ENCODE measurements at regions of chr13 and their contacts with region 1.

Region 1: DNA sequence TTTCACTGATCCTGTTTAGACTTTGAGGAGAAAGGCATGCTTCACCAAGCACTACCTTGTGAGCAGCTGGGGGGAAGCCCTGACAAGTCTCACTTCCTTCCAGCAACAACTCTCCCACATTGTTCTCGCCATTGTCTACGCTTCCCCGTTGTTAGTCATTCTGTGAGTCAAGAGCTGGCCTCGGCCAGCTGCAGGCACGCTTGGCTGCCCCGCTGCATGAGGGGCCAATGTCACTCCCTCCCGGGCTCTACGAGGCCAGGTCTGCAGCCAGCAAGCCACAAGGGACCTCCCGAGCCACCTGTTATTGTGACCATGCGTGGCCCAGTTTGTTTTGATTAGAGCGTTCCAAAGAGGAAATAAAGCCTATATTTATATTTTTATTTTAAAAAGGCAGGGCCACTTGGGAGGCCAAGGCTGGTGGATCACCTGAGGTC is 220.9 kb downstream of the FOXO1 start:
- DNase-seq: peak; percentile 100
- H3K4me3 ChIP-seq: no peak overlapping the region
- H3K27ac ChIP-seq: peak overlapping the region; percentile 92
- H3K4me1 ChIP-seq: peaks cover 80% of the 10 kb centered on the region
- CTCF ChIP-seq: no peak

Region 2: DNA sequence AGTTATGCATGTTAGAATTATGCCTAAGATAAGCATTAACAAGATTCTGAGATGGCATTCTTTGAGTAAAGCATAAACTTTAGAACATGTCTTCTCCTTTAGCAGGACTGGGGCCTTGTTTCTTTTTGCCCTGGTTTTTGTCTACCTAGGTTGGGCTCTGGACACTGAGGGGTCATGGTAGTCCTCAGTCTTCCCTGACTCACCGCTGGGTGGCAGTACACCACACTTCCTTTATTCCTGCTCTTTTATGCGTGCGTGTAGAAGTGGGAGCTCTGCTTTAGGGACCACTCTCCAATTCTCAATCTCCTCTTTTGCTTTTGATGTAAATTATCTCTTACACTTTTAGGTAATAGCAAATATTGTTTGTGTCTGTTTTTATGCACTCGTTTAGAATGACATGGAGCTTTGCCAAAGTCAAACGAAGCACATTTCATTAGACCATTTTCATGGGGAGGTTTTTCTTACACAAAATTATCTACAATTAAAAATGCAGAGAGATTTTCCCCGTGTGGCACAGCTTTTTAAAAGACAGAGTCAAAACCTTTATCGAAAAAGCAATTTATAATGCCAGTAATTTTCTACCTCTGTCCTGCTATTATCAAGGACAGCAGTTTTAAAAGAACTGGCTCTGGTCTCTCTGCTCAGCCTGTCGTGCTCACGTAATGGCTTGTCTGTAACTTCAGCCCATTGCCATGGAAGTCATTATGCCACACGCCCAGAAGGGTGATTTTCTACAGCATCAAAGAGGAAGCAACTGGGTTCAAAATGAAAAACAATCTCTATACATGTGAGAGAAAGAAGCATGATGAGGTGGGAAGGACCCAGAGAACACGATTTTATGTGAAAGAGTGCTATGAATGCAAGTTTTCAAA is 376.2 kb before region 1 on chr13:
- CTCF ChIA-PET with region 1: no interaction called
- POLR2A ChIA-PET with region 1: no interaction called
- intact Hi-C with region 1: loop called (anchors 2 kb)
- DNase-seq: peak; percentile 81
- H3K4me3 ChIP-seq: no peak overlapping the region
- H3K27ac ChIP-seq: no peak overlapping the region
- H3K4me1 ChIP-seq: peaks cover 24% of the 10 kb centered on the region
- CTCF ChIP-seq: peak; percentile 98

Region 3: DNA sequence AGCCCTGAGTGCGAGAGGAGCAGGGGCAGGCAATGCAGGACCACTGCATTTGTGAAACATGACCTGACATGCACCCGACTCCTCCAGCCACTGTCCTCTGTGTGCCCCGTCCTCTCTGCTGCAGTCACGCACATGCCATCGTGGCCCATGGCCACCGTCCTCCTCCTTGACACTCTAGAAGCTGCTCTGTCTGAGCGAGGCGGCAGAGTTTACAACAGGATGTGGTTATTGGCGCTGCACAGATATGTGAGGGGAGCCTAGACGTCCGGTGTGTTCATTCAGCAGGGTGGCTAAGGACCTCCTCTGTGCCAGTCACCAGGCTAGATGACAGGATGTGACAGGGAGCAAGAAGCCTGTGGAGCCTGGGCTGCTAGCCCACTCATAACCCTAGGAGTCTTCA is 57.0 kb before region 1 on chr13:
- CTCF ChIA-PET with region 1: no interaction called
- POLR2A ChIA-PET with region 1: no interaction called
- intact Hi-C with region 1: loop called (anchors 1 kb)
- DNase-seq: peak; percentile 96
- H3K4me3 ChIP-seq: peak overlapping the region; percentile 66
- H3K27ac ChIP-seq: peak overlapping the region; percentile 67
- H3K4me1 ChIP-seq: peaks cover 44% of the 10 kb centered on the region
- CTCF ChIP-seq: no peak

Region 4: DNA sequence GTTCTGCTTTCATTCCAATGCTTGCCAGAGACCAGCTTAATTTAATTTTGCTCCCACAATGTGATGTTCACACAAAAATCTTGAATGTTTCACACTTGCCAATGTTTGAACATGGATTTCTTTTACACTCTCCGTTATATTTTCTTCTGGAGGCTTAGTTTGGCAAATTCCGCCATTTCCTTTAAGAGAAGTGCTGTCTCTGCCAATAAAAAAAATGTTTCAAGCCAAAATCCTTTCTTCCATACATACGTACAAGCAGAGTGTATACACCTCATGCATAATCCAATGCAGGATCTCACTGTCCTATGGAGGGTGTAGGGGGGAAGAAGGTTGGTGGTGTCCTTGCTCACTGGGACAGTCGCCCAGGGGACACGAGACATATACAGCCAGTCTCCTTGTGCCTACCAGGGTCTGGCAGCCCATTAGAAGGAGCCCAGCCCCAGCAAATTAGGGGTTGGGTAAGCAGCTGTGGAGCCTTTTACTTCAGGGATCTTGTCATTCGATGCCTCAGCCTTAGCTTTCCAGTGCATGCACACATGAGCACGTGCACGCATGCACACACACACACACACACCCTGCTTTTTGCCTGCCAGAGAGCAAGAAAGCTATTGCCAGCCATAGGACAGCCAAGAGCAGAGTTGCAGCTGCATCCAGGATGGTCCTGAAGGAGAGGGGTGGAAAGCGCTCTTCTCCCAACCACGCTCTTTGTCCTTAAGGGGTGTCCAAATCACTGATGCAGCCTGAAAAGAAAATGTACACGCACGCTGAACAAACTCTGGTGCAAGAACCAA is 12.6 kb after region 1 on chr13:
- CTCF ChIA-PET with region 1: no interaction called
- POLR2A ChIA-PET with region 1: interaction called, 14 read pairs
- intact Hi-C with region 1: no loop called
- DNase-seq: no peak
- H3K4me3 ChIP-seq: no peak overlapping the region
- H3K27ac ChIP-seq: no peak overlapping the region
- H3K4me1 ChIP-seq: peaks cover 33% of the 10 kb centered on the region
- CTCF ChIP-seq: no peak

Region 5: GRCh38 chr13:40580566-40581276 is 135.1 kb after region 1 on chr13:
- CTCF ChIA-PET with region 1: no interaction called
- POLR2A ChIA-PET with region 1: interaction called, 6 read pairs
- intact Hi-C with region 1: loop called (anchors 1 kb)
- DNase-seq: peak; percentile 80
- H3K4me3 ChIP-seq: peak overlapping the region; percentile 55
- H3K27ac ChIP-seq: peak overlapping the region; percentile 99
- H3K4me1 ChIP-seq: peaks cover 99% of the 10 kb centered on the region
- CTCF ChIP-seq: no peak

Region 6: GRCh38 chr13:40653527-40654318 is 208.1 kb after region 1 on chr13:
- CTCF ChIA-PET with region 1: no interaction called
- POLR2A ChIA-PET with region 1: interaction called, 7 read pairs
- intact Hi-C with region 1: loop called (anchors 1 kb)
- DNase-seq: peak; percentile 58
- H3K4me3 ChIP-seq: peak overlapping the region; percentile 64
- H3K27ac ChIP-seq: peak overlapping the region; percentile 96
- H3K4me1 ChIP-seq: peaks cover 95% of the 10 kb centered on the region
- CTCF ChIP-seq: no peak; the same call in 1 of the 2 replicates

Region 7: GRCh38 chr13:40789275-40790133 is 343.9 kb after region 1 on chr13 and contains the start of gene SLC25A15:
- CTCF ChIA-PET with region 1: no interaction called
- POLR2A ChIA-PET with region 1: no interaction called
- intact Hi-C with region 1: no loop called
- DNase-seq: peak; percentile 89
- H3K4me3 ChIP-seq: peak within 1 kb of the TSS; percentile 72
- H3K27ac ChIP-seq: peak within 1 kb of the TSS; percentile 92
- H3K4me1 ChIP-seq: peaks cover 46% of the 10 kb centered on the region
- CTCF ChIP-seq: peak; percentile 47
- total RNA-seq, gene SLC25A15: 61.3 and 71.0 TPM in 2 replicates

Measured in OCI-LY7 (cell line).